Caki2 (cell line): ENCODE measurements at regions of chr6 and their contacts with region 1.

Region 1: GRCh38 chr6:122449069-122449468 is 22.5 kb downstream of the SERINC1 start:
- DNase-seq: peak; percentile 84

Region 2: DNA sequence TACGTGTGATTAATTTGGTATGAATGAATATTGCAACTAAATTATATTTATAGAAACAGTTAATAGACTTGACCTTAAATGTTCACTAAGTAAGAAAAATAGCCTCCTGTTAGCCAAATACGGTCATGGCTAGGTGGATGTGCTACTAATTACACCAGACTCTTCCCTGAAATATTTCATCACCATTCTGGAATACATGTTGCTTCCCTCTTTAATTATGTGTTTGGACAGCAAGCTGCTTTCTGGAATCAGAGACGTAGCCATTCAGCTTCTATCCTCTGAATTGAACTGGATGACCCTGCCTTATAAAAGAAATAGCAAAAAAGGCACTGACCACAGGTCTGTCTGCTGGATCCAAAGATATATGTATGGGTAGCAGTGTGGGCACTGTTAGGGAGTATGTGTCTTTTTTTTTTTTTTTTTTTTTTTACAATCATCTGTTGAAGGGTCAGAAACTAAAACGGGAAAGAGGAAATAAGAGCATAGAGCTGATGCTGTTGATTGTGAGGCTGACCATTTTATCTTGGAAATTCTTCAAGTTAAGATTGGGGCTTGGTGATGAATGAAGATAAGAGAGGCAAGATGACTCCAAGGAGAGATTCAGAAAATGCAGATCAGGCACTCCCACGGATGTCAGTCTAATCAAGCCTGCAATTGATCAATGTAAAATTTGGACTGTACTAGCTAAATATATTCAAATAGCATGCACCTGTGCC is 332.8 kb before region 1 on chr6:
- in situ Hi-C with region 1: no loop called
- DNase-seq: no peak

Region 3: GRCh38 chr6:122412001-122412400 is 37.1 kb before region 1 on chr6:
- in situ Hi-C with region 1: loop called (anchors 5 kb)
- DNase-seq: no peak

Region 4: DNA sequence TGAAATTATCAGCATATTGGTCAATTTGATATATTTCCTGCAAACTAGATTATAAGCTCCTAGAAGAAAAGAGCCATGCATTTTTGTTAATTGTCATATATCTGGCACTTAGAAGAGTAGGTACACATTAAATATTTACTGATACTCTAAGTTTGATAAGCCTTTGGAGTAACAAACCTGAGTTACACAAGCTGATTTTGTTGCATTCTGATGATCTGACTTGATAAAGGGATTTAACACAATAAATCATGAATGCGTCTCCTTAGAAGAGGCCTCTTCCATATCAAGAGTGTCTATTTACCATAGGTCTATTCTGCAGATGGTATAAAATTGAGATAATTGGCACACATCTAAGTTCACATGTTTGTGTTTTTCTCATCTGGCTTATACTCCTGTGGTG is 71.1 kb after region 1 on chr6:
- in situ Hi-C with region 1: no loop called
- DNase-seq: no peak

Region 5: GRCh38 chr6:122645256-122645655 is 196.2 kb after region 1 on chr6:
- in situ Hi-C with region 1: no loop called
- DNase-seq: no peak

Region 6: GRCh38 chr6:122709922-122710512 is 260.9 kb after region 1 on chr6:
- in situ Hi-C with region 1: no loop called
- DNase-seq: no peak